ENCODE measurements at regions of chr14 and their contacts with region 1.

Region 1: GRCh38 chr14:64186231-64187129 is 107.7 kb downstream of the ESR2 start:
- DNase-seq: no peak
- ATAC-seq: no peak
- H3K4me3 ChIP-seq: no peak overlapping the region
- H3K27ac ChIP-seq: no peak overlapping the region
- H3K4me1 ChIP-seq: no peaks in the 10 kb centered on the region
- H3K27me3 ChIP-seq: no peaks in the 10 kb centered on the region
- CTCF ChIP-seq: no peak
- POLR2A ChIP-seq: no peak
- RAD21 ChIP-seq: no peak

Region 2: GRCh38 chr14:64126548-64126947 is 59.9 kb before region 1 on chr14:
- CTCF ChIA-PET with region 1: no interaction called
- POLR2A ChIA-PET with region 1: no interaction called
- RAD21 ChIA-PET with region 1: no interaction called
- intact Hi-C with region 1: loop called (anchors 5 kb)
- DNase-seq: no peak
- ATAC-seq: no peak
- H3K4me3 ChIP-seq: no peak overlapping the region
- H3K27ac ChIP-seq: no peak overlapping the region
- H3K4me1 ChIP-seq: no peaks in the 10 kb centered on the region
- H3K27me3 ChIP-seq: no peaks in the 10 kb centered on the region
- CTCF ChIP-seq: no peak
- POLR2A ChIP-seq: no peak
- RAD21 ChIP-seq: no peak

Region 3: GRCh38 chr14:64960762-64961278 is 774.3 kb after region 1 on chr14:
- CTCF ChIA-PET with region 1: no interaction called
- POLR2A ChIA-PET with region 1: no interaction called
- RAD21 ChIA-PET with region 1: no interaction called
- intact Hi-C with region 1: no loop called
- DNase-seq: no peak
- ATAC-seq: peak; percentile 66
- H3K4me3 ChIP-seq: no peak overlapping the region
- H3K27ac ChIP-seq: no peak overlapping the region
- H3K4me1 ChIP-seq: no peaks in the 10 kb centered on the region
- H3K27me3 ChIP-seq: no peaks in the 10 kb centered on the region
- CTCF ChIP-seq: no peak; a peak in 1 of 6 replicates
- POLR2A ChIP-seq: no peak
- RAD21 ChIP-seq: no peak

Measured in HCT116 (cell line).